ENCODE measurements at regions of chr6 and their contacts with region 1.

Region 1: DNA sequence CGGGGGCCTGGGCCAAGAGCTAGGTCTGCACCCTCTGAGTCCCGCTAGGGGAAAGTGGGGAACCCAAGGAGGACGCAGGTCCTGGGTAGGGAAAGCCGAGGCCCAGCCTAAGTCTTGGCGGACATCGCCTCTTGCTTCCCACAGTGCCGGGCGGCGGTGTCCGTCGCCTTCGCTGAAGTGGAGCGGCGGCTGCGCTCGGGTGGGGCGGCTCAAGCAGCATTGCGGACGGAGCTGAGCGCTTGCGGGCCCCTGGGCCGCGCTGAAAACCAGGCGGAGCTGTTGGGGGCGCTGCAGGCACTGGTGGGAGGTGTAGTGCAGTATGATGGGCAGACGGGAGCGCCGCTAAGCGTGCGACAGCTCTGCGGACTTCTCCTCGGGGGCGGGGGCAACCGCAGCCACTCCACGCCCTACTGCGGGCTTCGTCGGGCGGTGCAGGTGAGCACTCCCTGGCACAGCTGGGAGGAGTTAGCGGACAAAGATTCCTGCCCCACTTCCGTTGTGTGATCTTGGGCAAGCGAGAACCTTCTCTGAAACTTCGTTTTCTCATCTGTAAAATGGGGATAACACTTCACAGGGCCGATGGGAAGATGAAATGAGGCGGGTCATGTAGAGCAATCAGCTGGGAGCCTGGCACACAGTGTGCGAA is 4.2 kb downstream of the PRSS16 start:
- DNase-seq: peak; percentile 85 to 92
- ATAC-seq: peak; percentile 91 to 96
- H3K4me3 ChIP-seq: peak overlapping the region; percentile 74
- H3K27ac ChIP-seq: peak overlapping the region; percentile 89 to 96
- H3K4me1 ChIP-seq: peaks cover 3% of the 10 kb centered on the region; the same call in 1 of the 3 replicates
- CTCF ChIP-seq: peak; percentile 56
- EP300 ChIP-seq: no peak
- POLR2A ChIP-seq: peak; percentile 49
- RAD21 ChIP-seq: peak in 1 of 2 experiments; percentile 34; a peak in 2 of 5 replicates

Region 2: GRCh38 chr6:27241443-27241842 is 10.3 kb before region 1 on chr6:
- CTCF ChIA-PET with region 1: interaction called, 12 read pairs
- POLR2A ChIA-PET with region 1: interaction called, 3 read pairs
- DNase-seq: no peak
- ATAC-seq: no peak
- H3K4me3 ChIP-seq: no peak overlapping the region
- H3K27ac ChIP-seq: no peak overlapping the region
- H3K4me1 ChIP-seq: peaks cover 11% of the 10 kb centered on the region
- CTCF ChIP-seq: no peak
- EP300 ChIP-seq: no peak
- POLR2A ChIP-seq: no peak
- RAD21 ChIP-seq: no peak

Region 3: DNA sequence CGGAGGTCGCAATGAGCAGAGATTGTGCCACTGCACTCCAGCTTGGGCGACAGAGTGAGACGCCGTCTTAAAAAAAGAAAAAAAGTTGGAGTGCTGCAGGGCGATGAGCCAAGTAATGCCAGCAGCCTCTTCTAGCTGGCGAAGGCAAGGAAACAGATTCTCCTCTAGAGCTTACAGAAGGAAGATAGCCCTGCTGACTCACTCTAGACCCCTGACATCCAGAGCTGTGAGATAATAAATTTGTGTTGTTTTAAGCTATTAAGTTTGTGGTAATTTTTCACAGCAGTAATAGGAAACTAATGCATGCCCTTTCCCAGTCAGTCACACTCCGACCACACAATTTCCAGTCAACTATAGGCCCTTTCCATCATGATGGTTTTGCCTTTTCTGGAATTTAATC is 12.2 kb after region 1 on chr6:
- CTCF ChIA-PET with region 1: interaction called, 11 read pairs
- POLR2A ChIA-PET with region 1: interaction called, 4 read pairs
- DNase-seq: no peak
- ATAC-seq: no peak
- H3K4me3 ChIP-seq: no peak overlapping the region
- H3K27ac ChIP-seq: no peak overlapping the region
- H3K4me1 ChIP-seq: no peaks in the 10 kb centered on the region
- CTCF ChIP-seq: no peak
- EP300 ChIP-seq: no peak
- POLR2A ChIP-seq: no peak
- RAD21 ChIP-seq: no peak

Region 4: GRCh38 chr6:28489366-28490204 is 1237.9 kb after region 1 on chr6:
- CTCF ChIA-PET with region 1: no interaction called
- POLR2A ChIA-PET with region 1: interaction called, 13 read pairs
- DNase-seq: peak; percentile 73 to 91
- ATAC-seq: peak; percentile 96 to 98
- H3K4me3 ChIP-seq: peak overlapping the region; percentile 62
- H3K27ac ChIP-seq: peak overlapping the region; percentile 85 to 93
- H3K4me1 ChIP-seq: peaks cover 4% of the 10 kb centered on the region; the same call in 2 of the 3 replicates
- CTCF ChIP-seq: no peak
- EP300 ChIP-seq: no peak
- POLR2A ChIP-seq: peak; percentile 53
- RAD21 ChIP-seq: no peak

Measured in A549 (cell line).